AG04449 (cell line): ENCODE measurements at regions of chr9 and their contacts with region 1.

Region 1: GRCh38 chr9:86948074-86948929 is 996 bp upstream of the GAS1 start:
- DNase-seq: no peak
- H3K4me3 ChIP-seq: peak overlapping the region; percentile 94
- CTCF ChIP-seq: peak; percentile 93

Region 2: GRCh38 chr9:86637515-86637914 is 310.8 kb before region 1 on chr9:
- CTCF ChIA-PET with region 1: interaction called, 16 read pairs
- POLR2A ChIA-PET with region 1: no interaction called
- DNase-seq: no peak
- H3K4me3 ChIP-seq: no peak overlapping the region
- CTCF ChIP-seq: peak; percentile 83

Region 3: GRCh38 chr9:86836797-86837196 is 111.5 kb before region 1 on chr9:
- CTCF ChIA-PET with region 1: no interaction called
- POLR2A ChIA-PET with region 1: no interaction called
- DNase-seq: no peak
- H3K4me3 ChIP-seq: no peak overlapping the region
- CTCF ChIP-seq: no peak

Region 4: GRCh38 chr9:86854898-86855523 is 93.3 kb before region 1 on chr9:
- CTCF ChIA-PET with region 1: no interaction called
- POLR2A ChIA-PET with region 1: no interaction called
- DNase-seq: peak; percentile 50
- H3K4me3 ChIP-seq: no peak overlapping the region
- CTCF ChIP-seq: no peak

Region 5: DNA sequence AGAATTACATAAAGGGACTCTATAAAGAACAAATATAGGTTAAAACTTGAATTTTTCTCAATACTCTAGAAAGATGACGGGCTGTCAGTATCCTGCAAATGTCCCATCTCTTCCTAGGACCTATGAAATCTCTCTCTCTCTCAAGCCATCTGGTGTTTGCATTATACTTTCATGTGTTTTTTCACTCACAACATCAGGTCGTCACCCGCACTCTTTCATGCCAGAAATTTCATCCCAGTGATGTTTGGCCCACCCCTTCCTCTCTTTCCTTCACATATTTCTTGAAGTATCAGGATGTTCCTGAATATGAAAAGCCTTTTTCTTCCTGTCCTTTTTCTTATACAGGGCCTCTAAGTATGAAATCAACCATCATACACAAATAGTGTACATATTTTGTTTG is 62.3 kb after region 1 on chr9:
- CTCF ChIA-PET with region 1: no interaction called
- POLR2A ChIA-PET with region 1: no interaction called
- DNase-seq: no peak
- H3K4me3 ChIP-seq: no peak overlapping the region
- CTCF ChIP-seq: no peak

Region 6: GRCh38 chr9:87080512-87081264 is 132.4 kb after region 1 on chr9:
- CTCF ChIA-PET with region 1: no interaction called
- POLR2A ChIA-PET with region 1: no interaction called
- DNase-seq: no peak
- H3K4me3 ChIP-seq: no peak overlapping the region
- CTCF ChIP-seq: no peak

Region 7: GRCh38 chr9:87107072-87107471 is 158.8 kb after region 1 on chr9:
- CTCF ChIA-PET with region 1: interaction called, 18 read pairs
- POLR2A ChIA-PET with region 1: no interaction called
- DNase-seq: no peak
- H3K4me3 ChIP-seq: no peak overlapping the region
- CTCF ChIP-seq: no peak

Region 8: DNA sequence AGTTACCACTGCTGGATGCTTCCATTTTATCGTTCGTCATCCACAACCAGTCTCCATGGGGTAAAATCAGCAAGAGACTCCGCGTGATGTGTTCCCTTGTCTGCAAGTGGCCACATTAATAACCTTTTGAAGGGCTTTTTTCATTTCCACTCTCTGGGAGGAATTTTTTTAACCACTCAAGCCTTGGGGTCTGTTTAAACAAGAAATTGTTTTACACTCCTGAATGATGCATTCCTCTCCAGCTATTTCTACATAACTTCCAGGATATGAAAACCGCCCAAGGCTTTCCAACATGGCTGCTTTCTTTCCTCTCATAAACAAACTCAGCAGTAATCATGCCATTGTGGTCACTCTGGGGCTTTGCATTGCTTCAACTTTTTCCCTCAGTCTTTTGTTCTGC is 332.1 kb after region 1 on chr9:
- CTCF ChIA-PET with region 1: no interaction called
- POLR2A ChIA-PET with region 1: interaction called, 13 read pairs
- DNase-seq: peak; percentile 100
- H3K4me3 ChIP-seq: no peak overlapping the region
- CTCF ChIP-seq: no peak

Region 9: GRCh38 chr9:87324613-87325194 is 376.4 kb after region 1 on chr9:
- CTCF ChIA-PET with region 1: interaction called, 66 read pairs
- POLR2A ChIA-PET with region 1: no interaction called
- DNase-seq: no peak
- H3K4me3 ChIP-seq: no peak overlapping the region
- CTCF ChIP-seq: peak; percentile 48